ENCODE measurements at regions of chr7 and their contacts with region 1.

Region 1: GRCh38 chr7:128240696-128241386 is at the start of gene LEP:
- DNase-seq: no peak
- H3K4me3 ChIP-seq: no peak within 1 kb of the TSS
- H3K27ac ChIP-seq: no peak within 1 kb of the TSS
- H3K4me1 ChIP-seq: peaks cover 0 to 7% (median 3%) of the 10 kb centered on the region in 4 donors
- H3K27me3 ChIP-seq: peaks cover 0 to 20% of the 10 kb centered on the region in 2 donors
- CTCF ChIP-seq: no peak

Region 2: GRCh38 chr7:128281605-128282380 is 41.0 kb after region 1 on chr7:
- intact Hi-C with region 1: no loop called
- DNase-seq: no peak
- H3K4me3 ChIP-seq: no peak overlapping the region
- H3K27ac ChIP-seq: no peak overlapping the region
- H3K4me1 ChIP-seq: no peaks in the 10 kb centered on the region
- H3K27me3 ChIP-seq: no peaks in the 10 kb centered on the region
- CTCF ChIP-seq: no peak

Region 3: GRCh38 chr7:128550920-128551319 is 310.1 kb after region 1 on chr7:
- intact Hi-C with region 1: loop called (anchors 5 kb)
- DNase-seq: no peak
- H3K4me3 ChIP-seq: no peak overlapping the region
- H3K27ac ChIP-seq: no peak overlapping the region
- H3K4me1 ChIP-seq: peaks cover 0 to 13% (median 1%) of the 10 kb centered on the region in 4 donors
- H3K27me3 ChIP-seq: no peaks in the 10 kb centered on the region
- CTCF ChIP-seq: no peak

Measured in tibial artery (tissue), 4 donors.